PC-3 (cell line): ENCODE measurements at regions of chr18 and their contacts with region 1.

Region 1: DNA sequence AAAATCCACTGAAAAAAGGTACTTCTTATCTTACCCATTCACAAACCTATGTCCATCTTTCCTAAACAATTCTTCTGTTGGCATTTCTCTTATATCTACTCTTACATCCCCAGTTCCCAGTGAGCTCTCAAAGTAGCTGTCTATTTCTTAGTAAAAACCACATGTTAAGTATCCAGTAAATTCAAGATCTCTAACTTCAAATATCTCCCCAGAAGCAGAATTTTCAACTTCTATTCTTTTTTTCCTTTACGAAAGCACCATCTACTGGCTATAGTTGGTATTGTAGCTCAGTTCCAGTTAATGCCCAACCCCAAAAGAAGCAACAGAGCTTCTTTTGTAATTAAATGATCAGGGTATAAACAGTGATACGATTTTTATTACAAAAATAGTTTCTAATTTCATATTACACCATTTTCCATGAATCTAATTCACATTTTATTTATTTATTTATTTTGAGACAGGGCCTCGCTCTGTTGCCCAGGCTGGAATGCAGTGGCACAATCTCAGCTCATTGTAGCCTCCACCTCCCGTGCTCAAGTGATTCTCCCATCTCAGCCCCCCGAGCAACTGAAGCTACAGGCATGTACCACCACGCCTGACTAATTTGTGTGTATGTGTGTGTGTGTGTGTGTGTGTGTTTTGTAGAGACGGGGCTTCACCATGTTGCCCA is 28.5 kb downstream of the HRH4 start:
- DNase-seq: peak; percentile 74
- ATAC-seq: 0 out of 2 replicates have a peak, but pooled peaks have one; percentile 24
- H3K4me3 ChIP-seq: no peak overlapping the region
- H3K27ac ChIP-seq: no peak overlapping the region
- H3K4me1 ChIP-seq: peaks cover 3% of the 10 kb centered on the region; the same call in 1 of the 2 replicates
- H3K27me3 ChIP-seq: peaks cover 10% of the 10 kb centered on the region
- CTCF ChIP-seq: peak; percentile 84

Region 2: GRCh38 chr18:24446953-24447538 is 41.9 kb before region 1 on chr18:
- CTCF ChIA-PET with region 1: interaction called, 38 read pairs
- POLR2A ChIA-PET with region 1: no interaction called
- intact Hi-C with region 1: loop called (anchors 1 kb)
- DNase-seq: peak; percentile 33
- ATAC-seq: peak; percentile 100
- H3K4me3 ChIP-seq: no peak overlapping the region
- H3K27ac ChIP-seq: no peak overlapping the region
- H3K4me1 ChIP-seq: no peaks in the 10 kb centered on the region
- H3K27me3 ChIP-seq: no peaks in the 10 kb centered on the region
- CTCF ChIP-seq: peak; percentile 47; the same call in 1 of the 2 replicates